ENCODE measurements at regions of chr1 and their contacts with region 1.

Region 1: DNA sequence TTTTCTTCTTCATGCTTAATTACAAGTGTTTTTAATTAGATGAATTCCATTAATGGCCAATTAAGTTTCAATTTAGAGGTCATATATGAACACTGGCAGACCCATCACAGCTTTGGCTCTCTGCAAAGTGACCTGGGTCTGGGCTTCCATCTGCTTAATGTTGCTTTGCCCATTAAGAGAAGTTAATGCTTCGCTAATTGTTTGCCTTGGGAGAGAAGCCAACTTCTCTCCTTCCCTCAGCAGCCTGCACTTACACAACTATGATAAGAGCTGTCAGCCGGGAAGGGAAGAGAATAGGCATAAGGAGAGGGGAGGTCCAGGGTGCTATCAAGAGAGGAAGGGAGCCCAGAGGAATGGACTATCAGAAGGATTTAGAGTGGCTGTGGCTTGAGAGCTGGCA is 29.0 kb upstream of the CCDC190 start:
- DNase-seq: no peak
- H3K4me3 ChIP-seq: no peak overlapping the region
- H3K27ac ChIP-seq: no peak overlapping the region
- H3K4me1 ChIP-seq: no peaks in the 10 kb centered on the region
- H3K27me3 ChIP-seq: no peaks in the 10 kb centered on the region
- CTCF ChIP-seq: no peak

Region 2: GRCh38 chr1:162942916-162943567 is 53.1 kb after region 1 on chr1:
- CTCF ChIA-PET with region 1: no interaction called
- POLR2A ChIA-PET with region 1: no interaction called
- intact Hi-C with region 1: loop called (anchors 5 kb)
- DNase-seq: no peak
- H3K4me3 ChIP-seq: no peak overlapping the region
- H3K27ac ChIP-seq: no peak overlapping the region
- H3K4me1 ChIP-seq: no peaks in the 10 kb centered on the region
- H3K27me3 ChIP-seq: no peaks in the 10 kb centered on the region
- CTCF ChIP-seq: no peak